ENCODE measurements at regions of chr7 and their contacts with region 1.

Region 1: GRCh38 chr7:73308665-73309214 is at the start of gene NSUN5:
- DNase-seq: peak; percentile 82
- ATAC-seq: peak; percentile 97
- H3K4me3 Mint-ChIP-seq: peak within 1 kb of the TSS; percentile 100
- H3K27ac Mint-ChIP-seq: peak within 1 kb of the TSS; percentile 94
- H3K4me1 Mint-ChIP-seq: peaks cover 30% of the 10 kb centered on the region
- H3K27me3 Mint-ChIP-seq: no peaks in the 10 kb centered on the region
- CTCF ChIP-seq: no peak
- total RNA-seq, gene NSUN5: 63.8 and 68.9 TPM in 2 replicates

Region 2: DNA sequence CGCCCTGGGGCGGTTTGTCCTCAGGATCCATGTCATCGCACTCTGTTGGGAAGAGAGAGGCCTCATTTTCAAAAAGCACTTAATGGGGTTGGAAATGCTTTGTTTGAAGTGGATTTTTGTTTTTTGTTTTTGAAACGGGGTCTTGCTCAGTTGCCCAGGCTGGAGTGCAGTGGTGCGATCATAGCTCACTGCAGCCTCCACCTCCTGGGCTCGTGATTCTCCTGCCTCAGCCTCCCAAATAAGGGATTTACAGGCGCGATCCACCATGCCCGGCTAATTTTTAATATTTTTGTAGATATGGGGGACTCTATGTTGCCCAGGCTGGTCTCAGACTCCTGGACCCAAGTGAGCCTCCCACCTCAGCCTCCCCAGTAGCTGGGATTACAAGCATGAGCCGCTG is 20.0 kb after region 1 on chr7:
- CTCF ChIA-PET with region 1: no interaction called
- POLR2A ChIA-PET with region 1: no interaction called
- intact Hi-C with region 1: loop called (anchors 1 kb)
- DNase-seq: no peak
- ATAC-seq: no peak
- H3K4me3 Mint-ChIP-seq: no peak overlapping the region
- H3K27ac Mint-ChIP-seq: no peak overlapping the region
- H3K4me1 Mint-ChIP-seq: peaks cover 7% of the 10 kb centered on the region
- H3K27me3 Mint-ChIP-seq: peaks cover 6% of the 10 kb centered on the region
- CTCF ChIP-seq: no peak

Region 3: GRCh38 chr7:73433924-73434700 is 125.4 kb after region 1 on chr7:
- CTCF ChIA-PET with region 1: no interaction called
- POLR2A ChIA-PET with region 1: no interaction called
- intact Hi-C with region 1: loop called (anchors 2 kb)
- DNase-seq: no peak
- ATAC-seq: peak; percentile 38
- H3K4me3 Mint-ChIP-seq: peak overlapping the region; percentile 61
- H3K27ac Mint-ChIP-seq: no peak overlapping the region
- H3K4me1 Mint-ChIP-seq: peaks cover 6% of the 10 kb centered on the region
- H3K27me3 Mint-ChIP-seq: peaks cover 8% of the 10 kb centered on the region
- CTCF ChIP-seq: no peak

Region 4: GRCh38 chr7:73557108-73557396 is 248.3 kb after region 1 on chr7:
- CTCF ChIA-PET with region 1: no interaction called
- POLR2A ChIA-PET with region 1: no interaction called
- intact Hi-C with region 1: loop called (anchors 1 kb)
- DNase-seq: peak; percentile 87
- ATAC-seq: peak; percentile 90
- H3K4me3 Mint-ChIP-seq: peak overlapping the region; percentile 90
- H3K27ac Mint-ChIP-seq: peak overlapping the region; percentile 87
- H3K4me1 Mint-ChIP-seq: peaks cover 28% of the 10 kb centered on the region
- H3K27me3 Mint-ChIP-seq: no peaks in the 10 kb centered on the region
- CTCF ChIP-seq: no peak

Measured in activated B cell treated with CpG ODN at 0.5 μM for 24 hours (primary cell).